ENCODE measurements at regions of chr7 and their contacts with region 1.

Region 1: GRCh38 chr7:53358269-53358668 is 322.8 kb downstream of the POM121L12 start:
- DNase-seq: no peak
- ATAC-seq: no peak
- H3K4me3 ChIP-seq: no peak overlapping the region
- H3K27ac ChIP-seq: no peak overlapping the region
- H3K4me1 ChIP-seq: no peaks in the 10 kb centered on the region
- H3K27me3 ChIP-seq: peaks cover 0 to 2% of the 10 kb centered on the region in 2 donors

Region 2: DNA sequence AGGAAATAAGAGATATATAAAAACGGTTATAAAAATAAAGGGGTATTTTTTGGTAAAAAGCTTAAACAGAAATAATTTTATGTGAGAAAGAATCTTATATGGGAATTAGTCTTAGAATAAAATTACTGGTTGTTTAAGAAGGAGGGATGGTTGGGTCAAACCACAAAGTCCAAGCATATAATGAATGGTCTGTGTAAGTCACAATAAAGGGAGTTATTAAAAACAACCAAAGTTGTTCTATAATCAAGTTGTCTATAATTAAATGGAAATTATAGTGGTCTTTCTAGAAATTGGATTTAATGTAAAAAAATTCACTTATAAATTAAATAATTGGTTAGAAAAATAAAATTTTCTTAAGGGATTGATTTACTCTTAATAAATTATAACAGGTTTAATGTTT is 18.0 kb before region 1 on chr7:
- intact Hi-C with region 1: loop called in 1 of 2 experiments (anchors 1 kb)
- DNase-seq: no peak
- ATAC-seq: no peak
- H3K4me3 ChIP-seq: no peak overlapping the region
- H3K27ac ChIP-seq: no peak overlapping the region
- H3K4me1 ChIP-seq: no peaks in the 10 kb centered on the region
- H3K27me3 ChIP-seq: no peaks in the 10 kb centered on the region

Region 3: DNA sequence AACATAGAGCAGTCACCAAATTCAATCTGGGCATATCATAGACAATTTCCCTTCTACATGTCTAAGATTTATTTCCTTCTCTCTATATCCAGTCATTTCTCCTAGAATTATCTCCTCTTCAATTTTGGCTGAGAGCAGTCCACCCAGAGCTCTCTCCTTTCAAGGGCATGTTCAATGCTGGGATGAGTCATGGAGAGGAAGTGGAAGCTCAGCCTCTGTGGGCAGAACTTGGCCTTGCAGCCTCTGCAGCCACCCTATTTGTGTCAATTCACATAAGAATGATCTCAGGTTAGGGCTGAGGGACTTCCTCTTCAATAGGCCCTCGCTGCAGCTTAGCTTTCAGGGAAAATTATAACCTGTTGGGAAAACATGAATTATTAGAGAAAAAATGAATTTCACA is 238.0 kb after region 1 on chr7:
- intact Hi-C with region 1: no loop called
- DNase-seq: no peak
- ATAC-seq: no peak
- H3K4me3 ChIP-seq: no peak overlapping the region
- H3K27ac ChIP-seq: no peak overlapping the region
- H3K4me1 ChIP-seq: no peaks in the 10 kb centered on the region
- H3K27me3 ChIP-seq: no peaks in the 10 kb centered on the region